Aorta (tissue), 5 donors: ENCODE measurements at regions of chr7 and their contacts with region 1.

Region 1: DNA sequence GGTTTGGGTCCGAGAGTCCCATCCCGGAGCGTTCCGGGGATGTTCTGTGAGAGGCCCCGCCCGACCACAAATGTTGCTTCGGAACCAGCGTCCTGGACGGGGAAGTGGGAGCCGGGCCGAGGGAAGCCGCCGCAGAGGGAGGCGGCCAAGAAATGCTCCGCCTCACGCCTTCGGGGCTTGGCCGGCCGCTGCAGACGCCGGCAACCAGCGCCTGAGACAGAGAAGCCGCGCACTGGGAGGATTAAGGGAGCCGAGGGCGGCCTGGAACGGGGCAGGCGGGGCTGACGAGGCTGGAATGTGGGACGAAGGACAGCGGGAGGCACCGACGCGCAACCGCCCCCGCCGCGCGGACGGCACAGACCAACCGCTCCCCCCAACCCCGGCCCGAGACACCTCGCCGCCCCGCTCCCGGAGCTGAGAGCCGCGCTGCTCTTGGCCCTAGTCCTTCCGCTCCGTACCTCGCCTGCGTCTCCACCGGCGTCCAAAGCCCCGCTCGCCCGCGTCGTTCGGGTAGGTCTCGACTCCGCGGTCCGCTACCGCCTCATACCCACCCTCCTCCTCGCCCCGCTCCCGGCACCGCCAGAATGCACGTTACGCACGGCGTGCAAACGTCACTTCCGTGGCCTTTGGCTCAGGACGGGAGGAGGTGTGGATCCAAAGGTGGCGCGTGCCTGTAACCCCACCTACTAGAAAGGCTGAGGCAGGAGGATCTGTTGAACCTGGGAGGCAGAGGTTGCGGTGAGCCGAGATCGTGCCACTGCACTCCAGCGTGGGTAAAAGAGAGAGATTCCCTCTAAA is 36.7 kb upstream of the KCTD7 start:
- DNase-seq: peak; percentile 95 to 98
- ATAC-seq: peak; percentile 95
- H3K4me3 ChIP-seq: peak overlapping the region; percentile 72 to 79
- H3K27ac ChIP-seq: peak overlapping the region; percentile 65 to 89
- H3K4me1 ChIP-seq: no peaks in the 10 kb centered on the region
- H3K27me3 ChIP-seq: no peaks in the 10 kb centered on the region

Region 2: GRCh38 chr7:66474441-66474840 is 117.6 kb before region 1 on chr7:
- intact Hi-C with region 1: loop called in 1 of 2 experiments (anchors 2 kb)
- DNase-seq: no peak
- ATAC-seq: no peak
- H3K4me3 ChIP-seq: no peak overlapping the region
- H3K27ac ChIP-seq: no peak overlapping the region
- H3K4me1 ChIP-seq: no peaks in the 10 kb centered on the region
- H3K27me3 ChIP-seq: no peaks in the 10 kb centered on the region

Region 3: DNA sequence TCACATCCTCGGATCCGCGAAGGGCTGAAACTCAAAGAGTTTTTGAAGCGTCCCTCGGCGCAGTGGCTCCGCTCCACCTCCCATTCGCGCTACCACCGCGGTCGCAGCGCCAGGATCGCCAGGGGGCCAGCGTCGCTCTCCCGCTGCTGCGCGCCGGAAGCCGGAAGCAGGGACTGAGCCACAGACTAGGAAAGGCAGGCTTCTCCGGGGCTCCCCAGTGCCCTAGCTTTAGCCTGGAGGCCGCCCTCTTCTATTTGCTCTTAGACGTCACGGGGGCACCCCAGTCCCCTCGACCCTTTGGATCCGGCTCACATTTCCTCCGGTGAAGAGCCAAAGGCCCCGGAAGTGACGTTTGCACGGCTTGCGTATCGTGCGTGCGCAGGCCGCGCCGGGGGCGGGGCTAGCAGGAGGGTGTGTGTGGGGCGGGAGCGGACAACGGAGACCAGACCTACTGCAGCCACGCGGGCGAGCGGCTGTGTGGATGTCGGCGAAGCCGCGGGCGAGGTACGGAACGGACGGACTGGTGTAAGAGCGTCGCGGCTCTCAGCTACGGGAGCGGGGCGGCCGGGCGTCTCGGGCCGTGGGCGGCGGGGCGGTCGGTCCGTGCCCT is 62.2 kb after region 1 on chr7:
- intact Hi-C with region 1: no loop called
- DNase-seq: peak; percentile 99
- ATAC-seq: peak; percentile 99
- H3K4me3 ChIP-seq: peak overlapping the region; percentile 47 to 74
- H3K27ac ChIP-seq: peak overlapping the region; percentile 89 to 95
- H3K4me1 ChIP-seq: no peaks in the 10 kb centered on the region
- H3K27me3 ChIP-seq: no peaks in the 10 kb centered on the region